ENCODE measurements at regions of chr3 and their contacts with region 1.

Region 1: DNA sequence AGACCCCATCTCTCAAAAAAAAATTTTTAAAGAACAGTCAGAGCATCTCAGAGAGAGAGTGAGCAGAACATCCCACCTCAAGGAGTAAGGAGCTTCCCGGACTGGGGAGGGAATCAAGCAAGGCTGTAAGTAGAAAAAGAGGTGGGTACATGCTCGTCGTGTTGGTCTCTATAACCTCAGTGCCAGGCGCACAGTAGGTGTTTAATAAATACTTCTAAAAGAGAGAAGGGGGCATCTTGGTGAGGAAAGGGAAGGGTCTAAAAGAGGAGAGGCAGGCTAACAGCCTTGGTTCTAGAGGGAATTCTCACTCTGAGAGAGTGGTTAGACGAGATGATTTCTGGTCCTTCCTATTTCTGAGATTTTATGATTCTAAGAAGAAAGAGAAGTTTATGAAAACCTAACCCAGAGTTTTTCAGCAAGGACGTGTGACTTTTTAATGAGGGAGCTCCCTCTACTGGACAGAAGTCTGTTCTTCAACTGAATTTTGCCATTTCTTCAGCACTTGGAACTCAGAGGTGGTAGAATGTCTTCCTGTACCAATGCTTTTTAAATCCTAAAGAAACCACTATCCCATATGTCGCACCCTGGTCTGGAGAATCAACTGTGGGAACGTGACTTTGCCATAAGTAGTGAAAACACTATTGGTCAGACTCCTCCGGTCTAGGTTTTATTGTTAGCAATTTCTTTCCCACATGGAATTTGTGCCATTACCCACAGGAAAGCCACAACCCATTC is 199.7 kb upstream of the LMCD1 start:
- H3K4me3 ChIP-seq: no peak overlapping the region
- H3K27ac ChIP-seq: no peak overlapping the region
- H3K4me1 ChIP-seq: no peaks in the 10 kb centered on the region
- CTCF ChIP-seq: 0 out of 2 replicates have a peak, but pooled peaks have one; percentile 19

Region 2: GRCh38 chr3:8283193-8283592 is 18.7 kb before region 1 on chr3:
- CTCF ChIA-PET with region 1: interaction called, 13 read pairs
- POLR2A ChIA-PET with region 1: no interaction called
- H3K4me3 ChIP-seq: no peak overlapping the region
- H3K27ac ChIP-seq: no peak overlapping the region
- H3K4me1 ChIP-seq: no peaks in the 10 kb centered on the region
- CTCF ChIP-seq: no peak

Region 3: GRCh38 chr3:8290611-8291010 is 11.3 kb before region 1 on chr3:
- CTCF ChIA-PET with region 1: interaction called, 21 read pairs
- POLR2A ChIA-PET with region 1: no interaction called
- H3K4me3 ChIP-seq: no peak overlapping the region
- H3K27ac ChIP-seq: no peak overlapping the region
- H3K4me1 ChIP-seq: no peaks in the 10 kb centered on the region
- CTCF ChIP-seq: no peak

Region 4: GRCh38 chr3:8324740-8325139 is 22.8 kb after region 1 on chr3:
- CTCF ChIA-PET with region 1: interaction called, 26 read pairs
- POLR2A ChIA-PET with region 1: no interaction called
- H3K4me3 ChIP-seq: no peak overlapping the region
- H3K27ac ChIP-seq: no peak overlapping the region
- H3K4me1 ChIP-seq: peaks cover 13% of the 10 kb centered on the region
- CTCF ChIP-seq: peak; percentile 55; the same call in 1 of the 2 replicates

Measured in HEK293 (cell line).